ENCODE measurements at regions of chr4 and their contacts with region 1.

Region 1: GRCh38 chr4:118772081-118772766 is 63.7 kb downstream of the SEC24D start:
- DNase-seq: no peak
- ATAC-seq: peak; percentile 75

Region 2: GRCh38 chr4:118888666-118889311 is 116.6 kb after region 1 on chr4 and contains the start of gene SYNPO2:
- intact Hi-C with region 1: loop called in 1 of 2 experiments (anchors 5 kb)
- DNase-seq: peak; percentile 61 to 71
- ATAC-seq: peak; percentile 78
- total RNA-seq, gene SYNPO2: 11.8 to 141 TPM

Region 3: GRCh38 chr4:118927974-118928373 is 155.8 kb after region 1 on chr4:
- intact Hi-C with region 1: no loop called
- DNase-seq: peak; percentile 31 to 63
- ATAC-seq: no peak

Region 4: DNA sequence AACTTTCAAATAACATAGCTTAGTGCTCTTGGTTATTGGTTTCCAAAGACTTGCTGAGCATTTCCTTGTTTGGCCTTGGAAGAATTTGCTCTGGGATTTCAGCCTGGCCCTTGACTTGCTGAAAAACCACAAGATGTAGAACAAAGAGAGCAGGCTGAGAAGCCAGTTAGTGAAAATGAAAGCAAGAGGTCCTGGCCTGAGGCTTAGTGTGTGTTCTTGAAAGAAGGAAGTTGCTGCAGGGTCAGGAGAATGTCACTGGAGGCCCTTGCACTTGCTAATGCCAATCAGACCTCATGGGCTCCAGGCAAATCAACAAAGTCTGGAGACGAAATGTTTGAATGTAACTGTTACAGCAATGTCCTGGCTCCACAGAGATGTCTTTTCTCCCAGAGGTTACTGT is 195.8 kb after region 1 on chr4:
- intact Hi-C with region 1: loop called in 1 of 2 experiments (anchors 5 kb)
- DNase-seq: peak; percentile 27 to 71
- ATAC-seq: peak; percentile 85